B cell (primary cell): ENCODE measurements at regions of chr3 and their contacts with region 1.

Region 1: DNA sequence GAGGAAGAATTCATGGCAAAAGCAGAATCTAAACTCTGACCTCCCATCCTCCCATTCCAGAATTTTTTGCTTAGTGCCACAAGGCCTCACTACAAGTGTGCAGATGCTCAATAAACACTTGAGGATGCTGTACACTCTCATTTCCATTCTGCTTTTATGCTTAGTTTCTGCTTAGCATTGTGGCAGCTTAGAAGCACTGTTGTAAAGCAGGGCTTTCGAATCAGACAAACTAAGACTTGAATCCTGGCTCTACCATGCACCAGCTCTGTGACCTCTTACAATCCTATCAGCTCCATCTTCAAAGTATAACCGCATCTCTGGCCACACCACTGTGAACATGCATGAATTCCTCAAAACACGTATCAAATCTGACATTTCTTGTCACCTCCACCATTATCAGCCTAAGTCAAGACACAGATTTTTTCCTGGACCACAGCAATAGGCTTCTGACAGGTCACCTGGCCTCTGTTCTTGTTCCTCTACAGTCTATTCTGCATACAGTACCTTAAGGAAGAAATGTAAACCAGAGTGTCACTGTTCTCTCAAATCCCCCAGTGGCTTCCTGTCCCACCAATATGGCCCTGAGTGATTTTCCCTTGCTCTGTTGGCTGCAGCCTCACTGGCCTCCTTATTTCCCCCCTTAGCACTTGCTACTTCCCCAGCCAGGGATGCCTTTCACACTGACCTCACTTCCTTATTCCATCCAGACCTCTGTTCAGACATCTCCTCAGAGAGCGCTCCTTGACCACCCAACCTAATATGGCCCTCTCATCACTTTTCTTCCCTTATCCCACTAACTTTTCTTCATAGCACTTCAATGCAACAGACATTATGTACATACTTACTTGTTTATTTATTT is 8.1 kb upstream of the PHC3 start:
- DNase-seq: no peak
- ATAC-seq: no peak
- H3K4me3 ChIP-seq: no peak overlapping the region
- H3K4me3 Mint-ChIP-seq: no peak overlapping the region
- H3K27ac ChIP-seq: no peak overlapping the region
- H3K27ac Mint-ChIP-seq: no peak overlapping the region
- H3K4me1 ChIP-seq: peaks cover 0 to 7% of the 10 kb centered on the region in 2 donors
- H3K4me1 Mint-ChIP-seq: peaks cover 12% of the 10 kb centered on the region
- H3K27me3 ChIP-seq: no peaks in the 10 kb centered on the region
- H3K27me3 Mint-ChIP-seq: no peaks in the 10 kb centered on the region
- CTCF ChIP-seq: peak; percentile 30

Region 2: GRCh38 chr3:170257145-170257544 is 67.5 kb after region 1 on chr3:
- CTCF ChIA-PET with region 1: no interaction called
- POLR2A ChIA-PET with region 1: no interaction called
- intact Hi-C with region 1: no loop called
- DNase-seq: no peak
- ATAC-seq: no peak
- H3K4me3 ChIP-seq: no peak overlapping the region
- H3K4me3 Mint-ChIP-seq: no peak overlapping the region
- H3K27ac ChIP-seq: no peak overlapping the region
- H3K27ac Mint-ChIP-seq: no peak overlapping the region
- H3K4me1 ChIP-seq: peaks cover 12 to 14% of the 10 kb centered on the region in 2 donors
- H3K4me1 Mint-ChIP-seq: peaks cover 13% of the 10 kb centered on the region
- H3K27me3 ChIP-seq: no peaks in the 10 kb centered on the region
- H3K27me3 Mint-ChIP-seq: no peaks in the 10 kb centered on the region
- CTCF ChIP-seq: no peak

Region 3: DNA sequence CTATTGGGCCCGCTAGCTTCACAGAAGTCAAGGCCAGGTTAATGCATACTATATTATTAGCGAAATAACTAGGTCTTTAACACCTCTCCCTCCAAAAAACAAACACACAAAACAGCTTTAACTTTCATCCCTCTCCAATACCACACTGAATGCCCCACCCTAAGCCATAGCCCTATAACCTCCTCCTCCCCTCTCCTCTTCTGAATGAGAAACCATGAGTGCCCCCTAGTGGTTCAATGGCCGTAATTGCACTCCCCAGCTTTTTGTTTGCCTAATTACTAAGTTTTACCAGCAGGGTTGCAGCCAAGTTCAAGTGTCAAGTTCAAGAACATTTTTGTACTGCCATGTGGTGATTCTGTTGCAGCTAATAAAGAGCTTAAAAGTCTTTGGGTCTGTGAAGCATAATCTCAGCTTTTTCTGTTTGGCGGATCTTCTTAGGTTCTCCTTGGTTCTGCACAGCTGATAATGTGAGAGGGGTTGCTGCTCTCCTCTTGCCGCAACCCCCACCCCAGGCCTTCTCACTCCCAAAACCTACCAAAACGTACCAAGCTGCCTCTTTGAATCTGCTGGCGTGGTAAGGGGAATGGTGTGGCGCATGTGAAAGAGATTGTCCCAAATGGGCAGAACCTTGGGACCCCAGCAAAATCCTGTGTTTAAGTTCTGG is 622.4 kb after region 1 on chr3:
- CTCF ChIA-PET with region 1: interaction called, 8 read pairs
- POLR2A ChIA-PET with region 1: no interaction called
- intact Hi-C with region 1: loop called (anchors 2 kb)
- DNase-seq: peak; percentile 80
- ATAC-seq: peak; percentile 81
- H3K4me3 ChIP-seq: no peak overlapping the region
- H3K4me3 Mint-ChIP-seq: no peak overlapping the region
- H3K27ac ChIP-seq: no peak overlapping the region
- H3K27ac Mint-ChIP-seq: no peak overlapping the region
- H3K4me1 ChIP-seq: no peaks in the 10 kb centered on the region
- H3K4me1 Mint-ChIP-seq: no peaks in the 10 kb centered on the region
- H3K27me3 ChIP-seq: no peaks in the 10 kb centered on the region
- H3K27me3 Mint-ChIP-seq: peaks cover 8% of the 10 kb centered on the region
- CTCF ChIP-seq: peak; percentile 87